ENCODE measurements at regions of chr1 and their contacts with region 1.

Region 1: DNA sequence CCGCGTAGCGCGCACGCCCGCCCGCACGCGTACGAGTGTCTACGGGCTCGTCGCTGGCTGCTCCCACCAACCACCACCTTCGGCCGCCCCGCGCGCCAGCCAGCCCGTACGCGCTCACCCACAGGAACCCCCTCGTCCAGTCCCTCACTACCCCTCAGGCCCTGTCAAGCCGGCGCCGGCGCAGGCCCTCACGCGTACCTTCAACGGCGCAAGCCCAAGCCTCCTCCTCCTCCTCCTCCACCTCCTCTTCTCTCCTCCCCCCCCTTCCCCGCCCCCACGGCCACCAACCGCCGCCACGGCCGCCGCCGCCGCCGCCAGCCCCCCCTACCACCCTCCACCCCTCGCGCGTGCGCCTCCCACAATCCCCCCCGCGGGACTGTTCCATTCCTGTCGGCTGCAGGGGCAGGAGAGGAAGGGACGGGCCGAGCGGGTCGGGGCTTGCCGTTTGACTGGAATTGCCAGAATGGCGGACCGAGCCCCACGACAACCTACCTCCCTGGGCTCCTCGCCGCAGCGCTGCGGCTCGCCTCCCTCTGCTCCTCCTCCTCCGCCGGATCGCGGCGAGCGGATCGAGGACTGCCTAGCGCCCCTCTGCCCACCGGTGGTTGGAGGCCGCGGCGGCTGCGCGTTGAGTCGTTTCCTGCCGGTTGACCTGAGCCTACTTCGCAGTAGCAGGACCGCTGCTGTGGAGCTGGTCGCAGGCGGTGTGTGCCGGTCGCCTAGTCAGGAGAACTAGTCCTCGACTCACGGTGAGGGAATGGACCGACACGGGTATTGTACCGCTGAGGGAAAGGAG is at the start of gene ASH1L:
- DNase-seq: peak; percentile 90
- ATAC-seq: peak; percentile 80
- H3K4me3 Mint-ChIP-seq: peak within 1 kb of the TSS; percentile 99
- H3K27ac Mint-ChIP-seq: peak within 1 kb of the TSS; percentile 98
- H3K4me1 Mint-ChIP-seq: peaks cover 41% of the 10 kb centered on the region
- H3K27me3 Mint-ChIP-seq: no peaks in the 10 kb centered on the region
- CTCF ChIP-seq: no peak
- total RNA-seq, gene ASH1L: 75.6 and 90.6 TPM in 2 replicates

Region 2: GRCh38 chr1:155529929-155530328 is 32.9 kb before region 1 on chr1:
- CTCF ChIA-PET with region 1: no interaction called
- POLR2A ChIA-PET with region 1: interaction called, 17 read pairs
- intact Hi-C with region 1: loop called (anchors 1 kb)
- DNase-seq: no peak
- ATAC-seq: peak; percentile 86
- H3K4me3 Mint-ChIP-seq: peak overlapping the region; percentile 74
- H3K27ac Mint-ChIP-seq: peak overlapping the region; percentile 81
- H3K4me1 Mint-ChIP-seq: peaks cover 52% of the 10 kb centered on the region
- H3K27me3 Mint-ChIP-seq: no peaks in the 10 kb centered on the region
- CTCF ChIP-seq: no peak

Region 3: GRCh38 chr1:155548706-155549105 is 14.1 kb before region 1 on chr1:
- CTCF ChIA-PET with region 1: no interaction called
- POLR2A ChIA-PET with region 1: no interaction called
- intact Hi-C with region 1: loop called (anchors 2 kb)
- DNase-seq: no peak
- ATAC-seq: no peak
- H3K4me3 Mint-ChIP-seq: no peak overlapping the region
- H3K27ac Mint-ChIP-seq: no peak overlapping the region
- H3K4me1 Mint-ChIP-seq: peaks cover 54% of the 10 kb centered on the region
- H3K27me3 Mint-ChIP-seq: no peaks in the 10 kb centered on the region
- CTCF ChIP-seq: no peak

Region 4: GRCh38 chr1:155657463-155657862 is 94.7 kb after region 1 on chr1:
- CTCF ChIA-PET with region 1: no interaction called
- POLR2A ChIA-PET with region 1: interaction called, 11 read pairs
- intact Hi-C with region 1: no loop called
- DNase-seq: no peak
- ATAC-seq: no peak
- H3K4me3 Mint-ChIP-seq: no peak overlapping the region
- H3K27ac Mint-ChIP-seq: no peak overlapping the region
- H3K4me1 Mint-ChIP-seq: no peaks in the 10 kb centered on the region
- H3K27me3 Mint-ChIP-seq: no peaks in the 10 kb centered on the region
- CTCF ChIP-seq: no peak

Region 5: DNA sequence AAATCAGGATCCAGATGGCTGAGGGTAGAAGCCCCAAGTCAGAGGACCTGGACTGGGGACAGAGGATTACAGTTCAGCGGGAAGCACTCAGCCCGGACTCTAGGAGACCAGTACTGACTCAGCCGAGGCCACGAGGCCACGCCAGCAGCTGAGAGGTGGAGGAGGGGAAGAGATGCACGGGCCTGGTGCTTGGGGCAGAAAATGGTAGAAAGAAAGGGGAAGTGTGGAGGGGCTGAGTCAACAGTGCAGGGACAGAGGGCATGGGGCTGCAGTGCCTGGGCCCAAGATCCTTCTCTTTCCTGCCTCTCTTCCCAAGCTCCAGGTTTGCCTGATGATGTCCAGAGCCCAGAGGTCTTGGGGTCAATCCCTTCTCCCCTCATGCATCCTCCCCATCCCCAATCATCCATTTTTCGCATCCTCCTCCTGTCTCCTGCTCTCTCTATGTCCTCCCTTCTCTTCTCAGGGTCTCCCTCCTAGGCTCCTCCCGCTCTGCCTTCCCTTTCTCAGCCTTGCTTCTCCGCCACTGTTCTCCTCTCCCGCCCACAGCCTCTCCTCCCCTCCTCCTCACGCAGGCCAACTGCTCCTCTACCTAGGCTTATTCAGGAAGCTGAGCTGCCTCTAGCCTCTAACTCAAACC is 407.9 kb after region 1 on chr1:
- CTCF ChIA-PET with region 1: no interaction called
- POLR2A ChIA-PET with region 1: no interaction called
- intact Hi-C with region 1: no loop called
- DNase-seq: peak; percentile 61
- ATAC-seq: peak; percentile 97
- H3K4me3 Mint-ChIP-seq: peak overlapping the region; percentile 73
- H3K27ac Mint-ChIP-seq: peak overlapping the region; percentile 90
- H3K4me1 Mint-ChIP-seq: peaks cover 98% of the 10 kb centered on the region
- H3K27me3 Mint-ChIP-seq: no peaks in the 10 kb centered on the region
- CTCF ChIP-seq: no peak

Measured in activated B cell treated with CpG ODN at 0.5 μM for 24 hours (primary cell).